GM18951 (cell line): ENCODE measurements at regions of chr2 and their contacts with region 1.

Region 1: GRCh38 chr2:15939854-15940660 is at the start of gene MYCN:
- POLR2A ChIP-seq: no peak

Region 2: DNA sequence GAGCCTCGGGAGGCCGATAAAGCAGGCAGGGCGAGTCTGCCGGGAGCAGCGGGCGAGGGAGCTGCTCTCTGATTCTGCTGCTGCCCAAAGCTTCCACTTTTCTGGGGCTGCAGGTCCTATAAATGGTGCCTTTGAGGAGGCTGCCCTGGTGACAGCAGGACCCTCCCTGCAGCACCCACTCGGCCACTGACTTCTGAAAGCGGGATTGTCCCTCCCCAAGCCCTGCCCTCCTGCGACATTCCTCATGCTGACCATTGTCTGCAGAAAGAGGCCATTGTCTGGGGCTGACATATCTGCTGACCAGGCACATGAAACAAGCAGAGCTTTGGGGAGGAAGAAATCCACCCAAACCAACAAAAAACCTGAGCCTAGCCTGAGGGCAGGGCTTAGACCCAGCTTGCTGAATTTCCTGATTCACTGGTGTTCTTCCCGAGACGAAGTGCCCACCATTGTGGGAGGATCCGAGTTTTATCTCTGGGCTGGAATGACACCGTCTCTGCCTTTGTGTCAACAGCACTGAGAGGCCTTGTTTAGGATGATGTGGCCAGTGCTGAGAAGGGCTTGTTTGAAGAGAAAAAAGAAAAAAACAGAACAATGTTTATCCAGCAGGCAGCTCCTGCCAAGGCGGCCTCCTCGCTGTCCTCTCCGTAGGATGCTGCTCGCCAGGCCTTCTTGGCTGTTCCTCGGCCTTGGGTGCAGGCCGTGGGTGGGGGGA is 130.0 kb after region 1 on chr2:
- in situ Hi-C with region 1: no loop called
- POLR2A ChIP-seq: no peak

Region 3: DNA sequence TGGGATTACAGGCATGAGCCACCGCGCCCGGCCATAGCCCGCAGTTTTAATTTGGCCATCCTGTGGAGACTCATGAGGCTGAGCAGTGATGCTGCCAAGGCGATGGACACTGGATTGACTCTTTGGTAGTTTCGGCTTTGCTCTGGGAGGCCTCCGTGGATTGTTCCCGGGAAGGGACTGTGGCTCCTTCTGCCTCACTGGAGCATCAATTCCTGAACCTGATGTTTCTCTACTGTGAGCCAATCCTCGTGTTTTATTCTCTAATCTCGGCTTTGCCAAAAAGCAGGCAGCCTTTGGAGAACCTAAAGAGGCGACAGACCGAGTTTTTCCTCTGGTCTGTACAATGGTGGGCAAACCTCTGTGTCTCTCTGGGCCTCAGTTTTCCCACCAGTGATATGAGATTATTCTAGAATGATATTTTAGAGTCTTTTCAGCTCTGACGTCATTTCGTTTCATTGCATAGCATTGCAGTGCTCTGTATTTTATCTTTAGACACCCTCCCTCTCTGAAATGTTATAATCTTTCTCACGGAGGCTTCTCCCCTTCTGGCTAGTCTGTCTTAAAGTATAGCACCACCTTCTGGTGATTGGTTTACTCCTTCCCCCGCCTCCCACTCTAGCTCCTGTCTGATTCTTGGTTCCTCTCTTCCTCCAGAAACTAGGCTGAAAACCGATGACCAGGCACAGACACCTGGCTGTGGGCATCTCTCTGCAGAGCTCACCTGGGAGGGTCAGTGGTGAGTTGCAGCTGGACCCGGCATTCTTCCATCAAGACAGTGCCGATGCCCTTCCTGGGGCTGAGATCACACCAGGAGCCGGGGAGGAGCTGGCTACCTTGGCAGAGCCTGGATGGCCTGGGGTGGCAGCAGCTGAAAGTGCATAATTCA is 341.6 kb after region 1 on chr2:
- in situ Hi-C with region 1: loop called (anchors 25 kb)
- POLR2A ChIP-seq: no peak